ENCODE measurements at regions of chr1 and their contacts with region 1.

Region 1: GRCh38 chr1:13662493-13662892 is 37.5 kb upstream of the PRDM2 start:
- DNase-seq: peak in 1 of 4 donors; percentile 13
- ATAC-seq: peak; percentile 31
- H3K4me3 ChIP-seq: no peak overlapping the region
- H3K27ac ChIP-seq: no peak overlapping the region
- H3K4me1 ChIP-seq: peaks cover 5 to 43% of the 10 kb centered on the region in 2 donors
- H3K27me3 ChIP-seq: peaks cover 0 to 6% of the 10 kb centered on the region in 2 donors
- CTCF ChIP-seq: no peak

Region 2: GRCh38 chr1:13828454-13829151 is 166.1 kb after region 1 on chr1:
- intact Hi-C with region 1: loop called in 1 of 2 experiments (anchors 10 kb)
- DNase-seq: peak in 3 of 4 donors; percentile 39 to 85 (median 75)
- ATAC-seq: peak; percentile 87
- H3K4me3 ChIP-seq: no peak overlapping the region
- H3K27ac ChIP-seq: no peak overlapping the region
- H3K4me1 ChIP-seq: peaks cover 0 to 3% of the 10 kb centered on the region in 2 donors
- H3K27me3 ChIP-seq: peaks cover 0 to 3% of the 10 kb centered on the region in 2 donors
- CTCF ChIP-seq: peak; percentile 42 to 53

Region 3: GRCh38 chr1:13960375-13960987 is 298.0 kb after region 1 on chr1:
- intact Hi-C with region 1: loop called in 1 of 2 experiments (anchors 2 kb)
- DNase-seq: peak; percentile 49 to 79 (median 70)
- ATAC-seq: peak; percentile 95
- H3K4me3 ChIP-seq: no peak overlapping the region
- H3K27ac ChIP-seq: no peak overlapping the region
- H3K4me1 ChIP-seq: no peaks in the 10 kb centered on the region
- H3K27me3 ChIP-seq: peaks cover 0 to 3% of the 10 kb centered on the region in 2 donors
- CTCF ChIP-seq: peak; percentile 96

Measured in left lung (tissue), 14 donors.